Gastrocnemius medialis (tissue), 4 donors: ENCODE measurements at regions of chr17 and their contacts with region 1.

Region 1: GRCh38 chr17:28086519-28086918 is 44.0 kb downstream of the NLK start:
- DNase-seq: no peak
- ATAC-seq: no peak
- H3K4me3 ChIP-seq: no peak overlapping the region
- H3K27ac ChIP-seq: no peak overlapping the region
- H3K4me1 ChIP-seq: peaks cover 7 to 11% of the 10 kb centered on the region in 2 donors
- H3K27me3 ChIP-seq: no peaks in the 10 kb centered on the region
- CTCF ChIP-seq: no peak
- POLR2A ChIP-seq: no peak

Region 2: DNA sequence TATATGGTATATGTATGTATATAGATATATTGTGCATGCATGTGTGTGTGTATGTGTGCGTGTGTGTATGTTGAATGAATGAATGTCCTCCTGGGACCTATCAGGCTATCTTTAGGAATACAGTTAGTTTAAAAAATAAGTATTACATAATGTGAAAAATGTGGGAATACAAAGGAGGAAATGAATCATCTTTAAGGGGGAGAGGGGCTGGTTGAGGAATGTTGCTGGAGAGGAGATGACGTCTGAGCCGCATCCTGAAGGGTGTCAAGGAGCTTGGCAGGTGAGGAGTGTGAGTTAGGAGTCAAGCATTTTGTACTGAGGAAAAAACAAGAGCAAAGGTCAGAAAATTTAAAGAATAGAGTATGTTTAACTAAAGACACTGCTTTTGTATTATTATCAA is 106.5 kb before region 1 on chr17:
- in situ Hi-C with region 1: loop called in 1 of 4 experiments (anchors 25 kb)
- intact Hi-C with region 1: no loop called
- DNase-seq: no peak
- ATAC-seq: peak; percentile 46 to 65
- H3K4me3 ChIP-seq: no peak overlapping the region
- H3K27ac ChIP-seq: peak overlapping the region in 2 of 4 donors; percentile 31 to 55
- H3K4me1 ChIP-seq: no peaks in the 10 kb centered on the region
- H3K27me3 ChIP-seq: no peaks in the 10 kb centered on the region
- CTCF ChIP-seq: no peak
- POLR2A ChIP-seq: no peak

Region 3: DNA sequence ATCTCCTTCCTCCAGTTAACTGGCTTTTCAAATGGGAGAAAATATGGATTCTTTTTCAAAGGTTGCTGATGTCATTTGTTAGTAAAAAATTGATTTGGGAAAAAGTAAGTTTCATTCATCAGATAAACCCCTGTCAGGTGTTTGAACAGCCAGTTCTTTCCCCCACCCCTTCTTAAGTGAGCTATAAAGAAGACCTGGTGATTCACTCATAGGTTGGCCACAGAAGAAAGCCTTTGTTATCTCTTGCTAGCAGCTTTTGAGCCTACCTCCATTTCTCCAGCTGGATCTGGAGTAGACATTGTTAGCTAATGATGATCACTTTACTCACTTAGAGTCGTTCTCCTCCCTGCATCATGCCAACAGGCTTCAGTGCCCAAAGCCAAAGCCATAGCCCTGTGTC is 19.0 kb after region 1 on chr17:
- in situ Hi-C with region 1: no loop called
- intact Hi-C with region 1: no loop called
- DNase-seq: no peak
- ATAC-seq: no peak
- H3K4me3 ChIP-seq: no peak overlapping the region
- H3K27ac ChIP-seq: no peak overlapping the region
- H3K4me1 ChIP-seq: no peaks in the 10 kb centered on the region
- H3K27me3 ChIP-seq: no peaks in the 10 kb centered on the region
- CTCF ChIP-seq: no peak
- POLR2A ChIP-seq: no peak

Region 4: DNA sequence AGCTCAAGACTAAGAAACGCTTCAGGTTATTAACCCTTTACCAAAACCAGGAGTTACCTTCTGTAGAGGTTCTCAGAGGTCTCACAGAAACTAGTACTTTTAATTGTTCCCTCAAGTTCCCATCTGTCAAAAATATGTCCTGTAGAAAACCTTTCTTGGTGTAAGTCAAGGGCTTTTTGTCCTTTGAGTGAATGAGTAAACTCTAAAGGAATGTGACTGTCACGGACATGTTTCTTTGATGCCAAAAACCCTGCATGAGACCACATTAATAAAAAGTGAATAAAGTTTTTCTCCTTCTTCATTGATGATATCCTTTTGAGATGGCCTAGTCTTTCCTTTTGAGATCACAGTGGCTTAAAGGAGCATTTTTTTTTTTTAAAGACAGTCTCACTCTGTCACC is 58.8 kb after region 1 on chr17:
- in situ Hi-C with region 1: loop called in 1 of 4 experiments (anchors 10 kb)
- intact Hi-C with region 1: no loop called
- DNase-seq: no peak
- ATAC-seq: no peak
- H3K4me3 ChIP-seq: no peak overlapping the region
- H3K27ac ChIP-seq: no peak overlapping the region
- H3K4me1 ChIP-seq: no peaks in the 10 kb centered on the region
- H3K27me3 ChIP-seq: no peaks in the 10 kb centered on the region
- CTCF ChIP-seq: no peak
- POLR2A ChIP-seq: no peak